ENCODE measurements at regions of chr1 and their contacts with region 1.

Region 1: GRCh38 chr1:110668549-110668948 is 6.2 kb downstream of the KCNA3 start:
- DNase-seq: peak; percentile 78
- H3K4me3 Mint-ChIP-seq: peak overlapping the region; percentile 75
- H3K27ac Mint-ChIP-seq: peak overlapping the region; percentile 87
- H3K4me1 Mint-ChIP-seq: peaks cover 49% of the 10 kb centered on the region
- H3K27me3 Mint-ChIP-seq: no peaks in the 10 kb centered on the region

Region 2: DNA sequence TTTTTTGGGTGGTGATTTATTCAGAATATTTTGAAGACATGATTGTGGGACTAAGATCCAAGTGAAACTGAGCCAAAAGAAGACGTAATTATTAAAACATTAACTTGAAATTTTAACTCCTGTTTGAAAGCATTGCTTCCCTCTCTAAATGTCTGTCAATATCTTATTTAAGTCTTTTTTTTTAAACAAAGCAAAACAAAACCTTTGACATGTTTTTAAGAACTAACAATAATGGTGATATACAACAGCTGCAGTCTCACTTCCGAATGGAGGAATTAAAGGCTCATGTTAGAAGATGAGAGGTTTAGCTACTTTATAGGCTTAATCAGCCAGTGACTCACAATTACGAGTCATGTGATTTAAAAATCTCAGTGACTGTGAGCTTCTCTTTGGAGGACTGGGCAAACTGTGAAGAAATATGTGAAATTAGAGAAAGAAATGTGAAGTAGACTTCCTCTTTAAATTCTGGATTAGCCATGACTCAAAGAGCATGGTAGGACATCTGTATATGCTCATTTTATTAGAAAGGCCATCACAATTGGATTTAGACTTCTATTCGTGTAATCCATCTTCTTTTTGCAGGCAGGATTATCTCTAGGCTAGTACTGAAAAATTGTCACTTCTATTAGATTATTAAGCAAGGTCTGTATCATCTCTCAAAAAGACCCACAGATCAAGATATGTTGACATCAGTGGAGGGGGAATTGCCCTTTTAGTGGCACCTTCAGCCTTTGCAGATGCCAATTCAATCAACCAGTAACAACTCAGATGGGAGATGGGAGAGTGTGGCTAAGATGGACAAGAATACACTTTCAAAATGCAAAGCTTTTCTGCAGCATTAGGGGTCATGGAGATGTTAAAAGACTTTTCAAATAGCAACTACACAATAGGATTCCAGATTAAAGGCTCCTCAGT is 22.5 kb before region 1 on chr1:
- intact Hi-C with region 1: loop called (anchors 1 kb)
- DNase-seq: peak; percentile 58
- H3K4me3 Mint-ChIP-seq: peak overlapping the region; percentile 36
- H3K27ac Mint-ChIP-seq: peak overlapping the region; percentile 71
- H3K4me1 Mint-ChIP-seq: peaks cover 45% of the 10 kb centered on the region
- H3K27me3 Mint-ChIP-seq: no peaks in the 10 kb centered on the region

Measured in activated CD4-positive, alpha-beta T cell treated with anti-CD3 and anti-CD28 coated beads, Interleukin-2, amount 10 ng/mL, durations not matched to agents 24 days and 14 days (primary cell).